ENCODE measurements at regions of chr6 and their contacts with region 1.

Region 1: DNA sequence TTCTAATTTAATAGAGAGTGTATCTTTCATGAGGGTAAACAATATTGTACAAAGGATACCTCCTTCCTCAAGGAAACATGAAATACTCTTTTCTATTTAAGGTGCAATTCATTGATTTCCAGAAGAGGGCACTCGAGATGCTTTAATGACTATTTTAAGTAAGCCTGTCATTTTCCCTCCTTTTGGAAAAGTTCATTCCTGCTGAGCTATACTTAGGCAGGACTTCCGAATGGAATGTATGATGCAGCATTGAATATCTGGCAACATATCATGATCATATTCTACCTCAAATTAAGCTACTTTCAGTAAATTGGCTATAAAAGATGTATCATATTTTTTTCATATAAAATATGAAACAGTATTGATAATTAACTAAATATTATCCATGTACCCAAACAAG is 5.0 kb downstream of the DST start:
- DNase-seq: peak in 1 of 2 donors; percentile 82
- H3K4me3 ChIP-seq: no peak overlapping the region
- H3K27ac ChIP-seq: no peak overlapping the region
- H3K4me1 ChIP-seq: peaks cover 0 to 4% (median 2%) of the 10 kb centered on the region in 4 donors
- H3K27me3 ChIP-seq: no peaks in the 10 kb centered on the region
- CTCF ChIP-seq: peak in 5 of 7 experiments; percentile 31 to 67 (median 53)
- EP300 ChIP-seq: no peak
- POLR2A ChIP-seq: no peak

Region 2: DNA sequence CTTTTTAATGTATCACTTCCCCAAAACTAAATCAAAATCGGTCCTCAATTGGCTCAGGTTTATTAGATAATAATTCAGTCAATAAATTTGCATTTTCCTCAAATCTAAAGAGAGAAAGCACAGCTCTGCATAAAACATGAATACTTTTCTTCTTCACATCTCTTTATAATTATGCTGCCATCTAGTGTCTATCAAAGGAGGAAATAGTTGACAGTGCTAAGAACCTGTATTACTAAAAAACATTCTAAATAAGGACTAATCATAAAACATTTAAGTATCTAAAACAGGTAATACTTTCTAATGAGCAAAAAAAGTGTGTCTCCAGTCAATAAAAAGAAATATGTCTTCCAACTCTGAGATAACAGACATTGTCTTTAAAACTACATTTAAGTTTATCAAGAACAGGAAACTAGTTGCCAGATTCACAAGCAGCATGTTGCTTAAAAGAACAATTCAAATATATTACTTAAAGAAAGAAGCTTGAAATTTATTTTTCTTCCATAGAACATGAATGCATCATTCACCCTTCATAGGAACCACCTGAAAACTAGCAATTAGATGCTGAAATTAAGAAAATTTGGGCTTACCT is 61.5 kb after region 1 on chr6:
- intact Hi-C with region 1: loop called (anchors 5 kb)
- DNase-seq: peak in 1 of 2 donors; percentile 45
- H3K4me3 ChIP-seq: no peak overlapping the region
- H3K27ac ChIP-seq: no peak overlapping the region
- H3K4me1 ChIP-seq: peaks cover 0 to 6% (median 0%) of the 10 kb centered on the region in 4 donors
- H3K27me3 ChIP-seq: no peaks in the 10 kb centered on the region
- CTCF ChIP-seq: peak in 4 of 7 experiments; percentile 14 to 49 (median 46)
- EP300 ChIP-seq: no peak
- POLR2A ChIP-seq: no peak

Region 3: GRCh38 chr6:56713254-56713672 is 75.6 kb after region 1 on chr6:
- intact Hi-C with region 1: no loop called
- DNase-seq: peak; percentile 50 to 73
- H3K4me3 ChIP-seq: no peak overlapping the region
- H3K27ac ChIP-seq: peak overlapping the region; percentile 59 to 79 (median 71)
- H3K4me1 ChIP-seq: peaks cover 20 to 48% (median 34%) of the 10 kb centered on the region in 4 donors
- H3K27me3 ChIP-seq: no peaks in the 10 kb centered on the region
- CTCF ChIP-seq: no peak
- EP300 ChIP-seq: no peak
- POLR2A ChIP-seq: no peak

Region 4: GRCh38 chr6:56757588-56757984 is 119.9 kb after region 1 on chr6:
- intact Hi-C with region 1: loop called (anchors 10 kb)
- DNase-seq: peak; percentile 69 to 83
- H3K4me3 ChIP-seq: no peak overlapping the region
- H3K27ac ChIP-seq: peak overlapping the region in 2 of 5 donors; percentile 25 to 62
- H3K4me1 ChIP-seq: peaks cover 12 to 50% (median 28%) of the 10 kb centered on the region in 4 donors
- H3K27me3 ChIP-seq: no peaks in the 10 kb centered on the region
- CTCF ChIP-seq: peak in 4 of 7 experiments; percentile 29 to 69 (median 54)
- EP300 ChIP-seq: no peak
- POLR2A ChIP-seq: no peak

Region 5: GRCh38 chr6:56851541-56852259 is 214.1 kb after region 1 on chr6:
- intact Hi-C with region 1: loop called (anchors 10 kb)
- DNase-seq: peak; percentile 32 to 92
- H3K4me3 ChIP-seq: peak overlapping the region; percentile 40 to 49 (median 44)
- H3K27ac ChIP-seq: peak overlapping the region in 4 of 5 donors; percentile 5 to 66 (median 57)
- H3K4me1 ChIP-seq: peaks cover 0 to 29% (median 18%) of the 10 kb centered on the region in 4 donors
- H3K27me3 ChIP-seq: peaks cover 0 to 3% (median 0%) of the 10 kb centered on the region in 3 donors
- CTCF ChIP-seq: peak in 5 of 7 experiments; percentile 24 to 63 (median 44)
- EP300 ChIP-seq: no peak
- POLR2A ChIP-seq: no peak

Measured in stomach (tissue), 19 donors.